ENCODE measurements at regions of chr13 and their contacts with region 1.

Region 1: DNA sequence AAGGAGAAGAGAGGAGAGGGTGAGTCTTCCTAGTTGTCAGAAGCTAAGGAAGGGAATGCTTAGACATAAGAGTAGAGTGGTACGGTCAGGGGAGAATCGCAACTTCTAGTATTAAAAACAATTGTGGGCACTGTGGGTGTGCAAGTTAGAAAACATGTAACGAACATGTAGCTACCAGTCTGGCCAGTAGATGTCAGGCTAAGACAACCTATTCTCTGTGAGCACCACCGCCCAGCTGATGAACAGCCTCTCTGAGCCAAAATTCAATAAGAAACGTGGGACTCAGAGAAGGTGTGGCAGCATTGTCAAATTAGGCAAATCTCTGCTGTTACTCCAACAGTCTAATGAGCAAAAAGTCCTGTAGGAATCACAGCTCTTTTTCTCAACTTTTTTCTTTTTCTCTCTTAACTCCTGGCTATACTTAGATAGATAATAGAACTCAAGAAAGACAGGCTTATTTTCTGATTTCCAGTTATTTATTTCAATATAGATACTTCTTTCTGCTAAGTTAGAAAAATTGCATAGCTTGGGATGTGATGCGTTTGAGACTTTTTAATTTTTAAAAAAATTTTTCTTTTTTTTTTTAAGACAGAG is 186.2 kb downstream of the USP12 start:
- DNase-seq: peak; percentile 72
- H3K4me3 ChIP-seq: no peak overlapping the region; a peak in 1 of 4 replicates
- H3K27ac ChIP-seq: no peak overlapping the region
- H3K4me1 ChIP-seq: peaks cover 0 to 8% of the 10 kb centered on the region in 2 experiments; a peak in 2 of 4 replicates
- H3K27me3 ChIP-seq: no peaks in the 10 kb centered on the region
- CTCF ChIP-seq: peak; percentile 84
- EP300 ChIP-seq: no peak
- RAD21 ChIP-seq: peak; percentile 98

Region 2: GRCh38 chr13:26946684-26947343 is 38.6 kb before region 1 on chr13:
- CTCF ChIA-PET with region 1: interaction called, 22 read pairs
- POLR2A ChIA-PET with region 1: no interaction called
- DNase-seq: peak; percentile 48
- H3K4me3 ChIP-seq: no peak overlapping the region
- H3K27ac ChIP-seq: no peak overlapping the region
- H3K4me1 ChIP-seq: no peaks in the 10 kb centered on the region
- H3K27me3 ChIP-seq: no peaks in the 10 kb centered on the region
- CTCF ChIP-seq: peak; percentile 80
- EP300 ChIP-seq: no peak
- RAD21 ChIP-seq: peak; percentile 90

Region 3: GRCh38 chr13:26971990-26972887 is 13.1 kb before region 1 on chr13:
- CTCF ChIA-PET with region 1: interaction called, 18 read pairs
- POLR2A ChIA-PET with region 1: no interaction called
- DNase-seq: no peak
- H3K4me3 ChIP-seq: no peak overlapping the region
- H3K27ac ChIP-seq: no peak overlapping the region
- H3K4me1 ChIP-seq: peaks cover 0 to 4% of the 10 kb centered on the region in 2 experiments; a peak in 1 of 4 replicates
- H3K27me3 ChIP-seq: no peaks in the 10 kb centered on the region
- CTCF ChIP-seq: peak; percentile 30
- EP300 ChIP-seq: no peak
- RAD21 ChIP-seq: no peak

Region 4: GRCh38 chr13:27283906-27284493 is 298.6 kb after region 1 on chr13:
- CTCF ChIA-PET with region 1: interaction called, 32 read pairs
- POLR2A ChIA-PET with region 1: no interaction called
- DNase-seq: peak; percentile 28
- H3K4me3 ChIP-seq: no peak overlapping the region
- H3K27ac ChIP-seq: no peak overlapping the region
- H3K4me1 ChIP-seq: no peaks in the 10 kb centered on the region
- H3K27me3 ChIP-seq: no peaks in the 10 kb centered on the region
- CTCF ChIP-seq: peak; percentile 51
- EP300 ChIP-seq: no peak
- RAD21 ChIP-seq: peak; percentile 77

Region 5: DNA sequence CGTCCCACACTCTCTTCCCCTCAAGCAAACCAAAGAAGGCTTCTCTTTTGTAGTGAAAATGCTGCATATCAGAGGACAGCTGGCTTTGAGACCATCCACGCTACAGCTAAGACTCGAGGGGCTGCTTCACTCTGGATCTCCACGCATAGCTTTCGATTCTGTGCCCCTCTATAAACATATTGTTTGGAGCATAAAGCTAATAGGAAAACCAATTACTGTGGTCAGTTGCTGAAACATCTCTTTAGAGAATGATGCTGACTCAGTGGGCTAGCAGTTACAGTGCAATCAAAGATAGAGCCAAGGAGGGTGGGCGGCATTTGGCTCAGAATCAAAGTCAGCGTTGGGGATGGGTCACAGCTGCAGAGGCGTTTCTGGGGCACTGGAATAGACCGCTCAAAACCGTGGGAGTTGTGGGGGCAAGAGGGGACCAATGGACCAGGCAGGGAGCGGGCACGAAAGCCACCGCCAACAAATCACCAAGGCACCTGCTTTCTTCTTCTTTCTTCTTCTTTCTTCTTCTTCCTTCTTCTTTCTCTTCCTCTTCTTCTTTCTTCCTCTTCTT is 361.9 kb after region 1 on chr13:
- CTCF ChIA-PET with region 1: interaction called, 22 read pairs
- POLR2A ChIA-PET with region 1: no interaction called
- DNase-seq: no peak
- H3K4me3 ChIP-seq: no peak overlapping the region
- H3K27ac ChIP-seq: no peak overlapping the region
- H3K4me1 ChIP-seq: no peaks in the 10 kb centered on the region
- H3K27me3 ChIP-seq: peaks cover 50% of the 10 kb centered on the region
- CTCF ChIP-seq: no peak
- EP300 ChIP-seq: no peak
- RAD21 ChIP-seq: no peak

Region 6: GRCh38 chr13:27374650-27375049 is 389.3 kb after region 1 on chr13:
- CTCF ChIA-PET with region 1: interaction called, 19 read pairs
- POLR2A ChIA-PET with region 1: no interaction called
- DNase-seq: peak; percentile 75
- H3K4me3 ChIP-seq: no peak overlapping the region; a peak in 1 of 4 replicates
- H3K27ac ChIP-seq: no peak overlapping the region
- H3K4me1 ChIP-seq: no peaks in the 10 kb centered on the region
- H3K27me3 ChIP-seq: peaks cover 62% of the 10 kb centered on the region
- CTCF ChIP-seq: peak; percentile 75
- EP300 ChIP-seq: no peak
- RAD21 ChIP-seq: peak; percentile 82

Measured in SK-N-SH (cell line).